ENCODE measurements at regions of chr11 and their contacts with region 1.

Region 1: DNA sequence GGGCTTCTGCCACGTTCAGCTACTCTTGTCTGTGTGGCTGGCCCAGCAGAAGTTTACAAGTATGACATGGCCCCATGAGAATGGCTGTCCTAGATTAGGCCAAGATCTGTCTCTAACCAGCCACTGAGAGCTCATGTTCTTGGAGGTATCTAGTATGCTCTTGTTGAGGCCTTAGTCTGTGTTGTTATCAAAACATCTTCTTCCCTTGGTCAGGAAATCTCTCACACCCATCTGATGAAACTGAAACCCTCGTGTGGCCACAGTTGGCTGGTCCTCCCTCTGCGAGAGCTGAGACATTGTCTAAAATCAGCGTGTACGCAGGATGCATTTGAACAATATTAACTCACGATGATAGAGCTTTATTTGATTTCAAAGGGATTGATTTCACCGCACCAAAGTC is 109.0 kb upstream of the NNMT start:
- DNase-seq: no peak
- ATAC-seq: peak; percentile 82
- H3K4me3 Mint-ChIP-seq: peak overlapping the region; percentile 55
- H3K27ac Mint-ChIP-seq: peak overlapping the region; percentile 94
- H3K4me1 Mint-ChIP-seq: peaks cover 69% of the 10 kb centered on the region
- H3K27me3 Mint-ChIP-seq: no peaks in the 10 kb centered on the region
- CTCF ChIP-seq: no peak

Region 2: GRCh38 chr11:114148013-114148382 is 39.2 kb before region 1 on chr11:
- CTCF ChIA-PET with region 1: no interaction called
- POLR2A ChIA-PET with region 1: no interaction called
- intact Hi-C with region 1: loop called (anchors 5 kb)
- DNase-seq: no peak
- ATAC-seq: no peak
- H3K4me3 Mint-ChIP-seq: no peak overlapping the region
- H3K27ac Mint-ChIP-seq: no peak overlapping the region
- H3K4me1 Mint-ChIP-seq: peaks cover 34% of the 10 kb centered on the region
- H3K27me3 Mint-ChIP-seq: peaks cover 2% of the 10 kb centered on the region
- CTCF ChIP-seq: no peak

Region 3: DNA sequence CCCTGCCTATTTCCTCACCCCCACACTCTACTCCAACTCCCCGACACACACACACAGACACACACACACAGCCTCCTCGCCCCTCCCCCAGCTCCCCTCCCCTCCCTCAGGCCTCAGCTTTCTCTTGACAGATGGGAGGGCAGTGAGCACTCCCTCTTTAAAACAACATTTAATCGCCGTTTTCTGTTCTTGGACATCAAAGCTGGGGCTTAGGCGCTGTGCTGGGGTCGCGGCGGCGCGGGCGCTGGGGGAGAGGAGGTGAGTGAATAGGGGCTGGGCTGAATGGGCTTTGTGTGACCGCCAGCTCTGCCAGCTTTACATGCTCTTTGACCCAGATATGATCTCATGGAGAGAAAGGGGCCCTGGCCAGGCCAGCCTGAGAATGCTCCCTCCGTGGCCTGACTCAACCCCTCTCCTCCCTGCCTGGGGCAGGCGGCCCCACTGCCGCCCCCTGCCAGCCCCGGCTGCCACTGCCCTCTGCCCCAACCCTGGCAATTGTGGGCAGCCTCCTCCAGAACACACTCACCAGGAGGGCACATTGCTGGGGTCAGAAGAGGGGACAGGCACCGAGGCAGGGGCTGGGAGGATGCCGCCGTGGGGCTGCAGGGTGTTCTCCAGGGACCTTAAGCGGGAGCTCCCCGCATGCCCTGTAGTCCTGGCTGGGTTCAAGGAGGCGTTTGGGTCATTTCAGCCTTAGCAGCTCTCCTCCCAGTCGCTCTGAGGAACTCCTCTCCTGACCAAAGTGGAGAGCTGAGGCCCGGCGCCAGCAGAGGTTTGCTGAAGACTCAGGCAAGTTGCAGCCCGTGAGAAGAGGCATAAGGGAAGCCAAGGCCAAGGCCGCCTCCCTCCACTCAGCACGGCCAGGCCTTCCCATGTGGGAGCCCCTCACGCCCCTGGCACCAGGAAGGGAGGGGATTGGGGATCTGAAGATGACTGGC is 70.7 kb after region 1 on chr11:
- CTCF ChIA-PET with region 1: interaction called, 21 read pairs
- POLR2A ChIA-PET with region 1: interaction called, 15 read pairs
- intact Hi-C with region 1: loop called (anchors 1 kb)
- DNase-seq: no peak
- ATAC-seq: no peak
- H3K4me3 Mint-ChIP-seq: peak overlapping the region; percentile 55
- H3K27ac Mint-ChIP-seq: peak overlapping the region; percentile 89
- H3K4me1 Mint-ChIP-seq: peaks cover 31% of the 10 kb centered on the region
- H3K27me3 Mint-ChIP-seq: no peaks in the 10 kb centered on the region
- CTCF ChIP-seq: no peak

Measured in activated B cell treated with CpG ODN at 0.5 μM for 24 hours (primary cell).